ENCODE measurements at regions of chr3 and their contacts with region 1.

Region 1: GRCh38 chr3:97009427-97010019 is 195.1 kb downstream of the EPHA6 start:
- DNase-seq: no peak
- ATAC-seq: no peak

Region 2: GRCh38 chr3:97932387-97932801 is 922.9 kb after region 1 on chr3:
- intact Hi-C with region 1: loop called (anchors 5 kb)
- DNase-seq: no peak
- ATAC-seq: peak; percentile 87